H1 (cell line): ENCODE measurements at regions of chr22 and their contacts with region 1.

Region 1: GRCh38 chr22:17891481-17892167 is 117.4 kb upstream of the BID start:
- DNase-seq: peak in 1 of 2 experiments; percentile 64
- H3K4me3 ChIP-seq: no peak overlapping the region
- H3K27ac ChIP-seq: no peak overlapping the region
- H3K4me1 ChIP-seq: no peaks in the 10 kb centered on the region
- H3K27me3 ChIP-seq: no peaks in the 10 kb centered on the region
- CTCF ChIP-seq: peak; percentile 60 to 86 (median 71)
- EP300 ChIP-seq: no peak
- POLR2A ChIP-seq: no peak
- RAD21 ChIP-seq: peak; percentile 52 to 64

Region 2: GRCh38 chr22:17903564-17904295 is 12.1 kb after region 1 on chr22:
- CTCF ChIA-PET with region 1: interaction called, 54 read pairs
- POLR2A ChIA-PET with region 1: interaction called, 3 read pairs
- DNase-seq: peak in 1 of 2 experiments; percentile 54
- H3K4me3 ChIP-seq: no peak overlapping the region; a peak in 1 of 8 replicates
- H3K27ac ChIP-seq: no peak overlapping the region
- H3K4me1 ChIP-seq: peaks cover 3 to 8% (median 7%) of the 10 kb centered on the region in 4 experiments; a peak in 5 of 7 replicates
- H3K27me3 ChIP-seq: no peaks in the 10 kb centered on the region
- CTCF ChIP-seq: 0 out of 4 replicates have a peak, but pooled peaks of 1 of the 3 experiments have one; percentile 6
- EP300 ChIP-seq: no peak
- POLR2A ChIP-seq: no peak
- RAD21 ChIP-seq: no peak; a peak in 1 of 4 replicates

Region 3: GRCh38 chr22:17920145-17920605 is 28.6 kb after region 1 on chr22:
- CTCF ChIA-PET with region 1: interaction called, 12 read pairs
- POLR2A ChIA-PET with region 1: no interaction called
- DNase-seq: no peak
- H3K4me3 ChIP-seq: no peak overlapping the region; a peak in 1 of 8 replicates
- H3K27ac ChIP-seq: no peak overlapping the region
- H3K4me1 ChIP-seq: peaks cover 16 to 32% (median 23%) of the 10 kb centered on the region in 4 experiments
- H3K27me3 ChIP-seq: no peaks in the 10 kb centered on the region
- CTCF ChIP-seq: no peak
- EP300 ChIP-seq: no peak
- POLR2A ChIP-seq: no peak
- RAD21 ChIP-seq: peak in 1 of 2 experiments; percentile 11; a peak in 2 of 4 replicates

Region 4: DNA sequence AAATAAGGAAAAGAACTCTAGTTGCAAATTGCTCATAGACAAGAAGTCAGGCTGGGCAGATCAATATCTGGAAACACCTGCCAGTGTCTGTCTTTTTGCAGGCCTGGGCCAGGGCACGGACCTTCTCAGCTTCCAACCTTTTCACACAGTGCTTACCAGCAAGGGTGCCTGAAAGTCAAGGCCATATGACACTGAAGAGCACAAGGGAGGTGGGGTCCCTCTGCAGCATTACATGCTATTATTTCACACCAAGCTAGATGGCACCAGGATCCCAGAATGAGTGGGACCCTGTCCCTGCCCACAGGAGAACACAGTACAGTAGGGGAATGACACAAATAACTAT is 180.3 kb after region 1 on chr22:
- CTCF ChIA-PET with region 1: interaction called, 50 read pairs
- POLR2A ChIA-PET with region 1: no interaction called
- DNase-seq: no peak
- H3K4me3 ChIP-seq: no peak overlapping the region
- H3K27ac ChIP-seq: no peak overlapping the region
- H3K4me1 ChIP-seq: no peaks in the 10 kb centered on the region
- H3K27me3 ChIP-seq: peaks cover 0 to 2% (median 0%) of the 10 kb centered on the region in 4 experiments; a peak in 2 of 7 replicates
- CTCF ChIP-seq: no peak
- EP300 ChIP-seq: no peak
- POLR2A ChIP-seq: no peak
- RAD21 ChIP-seq: no peak

Region 5: DNA sequence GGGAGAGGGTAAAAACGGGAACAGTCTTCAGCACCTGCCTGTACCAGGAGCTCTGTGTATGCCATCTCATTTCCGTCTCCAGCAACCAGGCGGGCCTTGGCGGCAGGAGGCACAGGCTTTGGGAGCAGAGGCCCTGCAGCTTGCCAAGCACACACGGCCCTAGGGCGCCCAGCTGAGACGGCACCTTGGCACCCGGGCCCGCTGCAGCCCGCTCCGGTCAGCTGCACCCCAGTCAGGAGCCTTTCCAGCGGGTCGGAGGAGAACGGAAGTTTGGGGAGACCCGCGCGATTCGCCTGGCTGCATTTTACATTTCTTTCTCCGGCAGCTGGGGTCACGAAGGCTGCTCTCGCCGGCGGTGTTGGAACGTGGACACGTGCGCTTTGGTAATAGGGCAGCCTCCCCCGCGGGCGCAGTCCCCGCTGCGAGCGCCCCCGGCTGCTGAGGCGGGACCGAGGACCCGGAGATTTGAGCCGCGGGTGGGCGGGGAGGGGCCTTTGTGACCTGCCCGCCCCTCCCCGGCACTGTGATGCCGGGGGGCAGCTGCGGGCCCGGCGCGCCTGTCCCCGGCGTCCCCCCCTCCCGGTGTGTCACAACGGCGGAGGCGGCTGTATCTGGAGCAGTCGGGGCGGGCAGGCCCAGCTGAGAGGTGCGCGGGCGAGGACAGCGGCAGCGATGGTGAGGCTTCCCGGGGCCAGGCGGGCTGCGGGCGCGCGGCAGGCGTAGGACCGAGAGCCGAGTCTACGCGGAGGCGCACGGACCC is 218.8 kb after region 1 on chr22 and contains the start of gene TUBA8:
- CTCF ChIA-PET with region 1: no interaction called
- POLR2A ChIA-PET with region 1: no interaction called
- DNase-seq: peak in 1 of 2 experiments; percentile 61
- H3K4me3 ChIP-seq: peak within 1 kb of the TSS; percentile 31 to 59 (median 42)
- H3K27ac ChIP-seq: no peak within 1 kb of the TSS
- H3K4me1 ChIP-seq: peaks cover 0 to 9% (median 5%) of the 10 kb centered on the region in 4 experiments; a peak in 5 of 7 replicates
- H3K27me3 ChIP-seq: peaks cover 11 to 33% (median 27%) of the 10 kb centered on the region in 4 experiments
- CTCF ChIP-seq: no peak
- EP300 ChIP-seq: no peak
- POLR2A ChIP-seq: no peak
- RAD21 ChIP-seq: no peak
- total RNA-seq, gene TUBA8: 0.23 and 1.0 TPM in 2 replicates